Activated CD8-positive, alpha-beta T cell treated with anti-CD3 and anti-CD28 coated beads, Interleukin-2, amount 10 ng/mL, durations not matched to agents 7 days and 5 days (primary cell): ENCODE measurements at regions of chr12 and their contacts with region 1.

Region 1: GRCh38 chr12:92987362-92987761 is 58.3 kb upstream of the EEA1 start:
- DNase-seq: peak; percentile 35
- ATAC-seq: peak; percentile 72
- H3K4me3 Mint-ChIP-seq: no peak overlapping the region
- H3K27ac Mint-ChIP-seq: no peak overlapping the region
- H3K4me1 Mint-ChIP-seq: peaks cover 10% of the 10 kb centered on the region
- H3K27me3 Mint-ChIP-seq: peaks cover 10% of the 10 kb centered on the region

Region 2: GRCh38 chr12:92769124-92769901 is 218.0 kb before region 1 on chr12:
- CTCF ChIA-PET with region 1: no interaction called
- POLR2A ChIA-PET with region 1: no interaction called
- DNase-seq: no peak
- ATAC-seq: peak; percentile 75
- H3K4me3 Mint-ChIP-seq: peak overlapping the region; percentile 4
- H3K27ac Mint-ChIP-seq: peak overlapping the region; percentile 62
- H3K4me1 Mint-ChIP-seq: peaks cover 34% of the 10 kb centered on the region
- H3K27me3 Mint-ChIP-seq: no peaks in the 10 kb centered on the region

Region 3: GRCh38 chr12:92784795-92785562 is 202.4 kb before region 1 on chr12:
- CTCF ChIA-PET with region 1: interaction called, 27 read pairs
- POLR2A ChIA-PET with region 1: no interaction called
- DNase-seq: peak; percentile 44
- ATAC-seq: peak; percentile 97
- H3K4me3 Mint-ChIP-seq: no peak overlapping the region
- H3K27ac Mint-ChIP-seq: no peak overlapping the region
- H3K4me1 Mint-ChIP-seq: peaks cover 17% of the 10 kb centered on the region
- H3K27me3 Mint-ChIP-seq: no peaks in the 10 kb centered on the region

Region 4: GRCh38 chr12:92871116-92871515 is 116.2 kb before region 1 on chr12:
- CTCF ChIA-PET with region 1: no interaction called
- POLR2A ChIA-PET with region 1: no interaction called
- DNase-seq: no peak
- ATAC-seq: no peak
- H3K4me3 Mint-ChIP-seq: no peak overlapping the region
- H3K27ac Mint-ChIP-seq: no peak overlapping the region
- H3K4me1 Mint-ChIP-seq: peaks cover 6% of the 10 kb centered on the region
- H3K27me3 Mint-ChIP-seq: no peaks in the 10 kb centered on the region

Region 5: GRCh38 chr12:92905258-92905810 is 82.0 kb before region 1 on chr12:
- CTCF ChIA-PET with region 1: no interaction called
- POLR2A ChIA-PET with region 1: no interaction called
- DNase-seq: no peak
- ATAC-seq: no peak
- H3K4me3 Mint-ChIP-seq: no peak overlapping the region
- H3K27ac Mint-ChIP-seq: no peak overlapping the region
- H3K4me1 Mint-ChIP-seq: peaks cover 26% of the 10 kb centered on the region
- H3K27me3 Mint-ChIP-seq: no peaks in the 10 kb centered on the region

Region 6: DNA sequence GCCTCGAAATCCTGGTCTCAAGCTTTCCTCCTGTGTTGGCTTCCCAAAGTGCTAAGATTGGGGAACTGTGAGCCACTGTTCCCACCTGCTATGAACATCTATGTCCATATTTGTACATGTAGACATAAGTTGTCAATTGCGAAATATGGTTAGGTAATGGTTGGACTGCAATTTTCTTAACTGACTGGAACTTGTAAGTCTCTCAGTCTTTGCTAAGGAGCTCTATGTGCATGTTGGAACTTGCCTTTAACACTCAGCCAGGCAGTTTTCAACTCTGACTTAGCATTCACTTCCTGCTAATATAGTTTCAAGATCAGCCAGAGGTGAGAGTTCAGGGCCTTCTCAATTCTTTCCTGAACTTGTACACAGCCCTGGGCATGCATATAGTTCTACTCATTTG is 13.8 kb before region 1 on chr12:
- CTCF ChIA-PET with region 1: interaction called, 46 read pairs
- POLR2A ChIA-PET with region 1: interaction called, 3 read pairs
- DNase-seq: no peak
- ATAC-seq: no peak
- H3K4me3 Mint-ChIP-seq: no peak overlapping the region
- H3K27ac Mint-ChIP-seq: peak overlapping the region; percentile 34
- H3K4me1 Mint-ChIP-seq: peaks cover 13% of the 10 kb centered on the region
- H3K27me3 Mint-ChIP-seq: no peaks in the 10 kb centered on the region

Region 7: DNA sequence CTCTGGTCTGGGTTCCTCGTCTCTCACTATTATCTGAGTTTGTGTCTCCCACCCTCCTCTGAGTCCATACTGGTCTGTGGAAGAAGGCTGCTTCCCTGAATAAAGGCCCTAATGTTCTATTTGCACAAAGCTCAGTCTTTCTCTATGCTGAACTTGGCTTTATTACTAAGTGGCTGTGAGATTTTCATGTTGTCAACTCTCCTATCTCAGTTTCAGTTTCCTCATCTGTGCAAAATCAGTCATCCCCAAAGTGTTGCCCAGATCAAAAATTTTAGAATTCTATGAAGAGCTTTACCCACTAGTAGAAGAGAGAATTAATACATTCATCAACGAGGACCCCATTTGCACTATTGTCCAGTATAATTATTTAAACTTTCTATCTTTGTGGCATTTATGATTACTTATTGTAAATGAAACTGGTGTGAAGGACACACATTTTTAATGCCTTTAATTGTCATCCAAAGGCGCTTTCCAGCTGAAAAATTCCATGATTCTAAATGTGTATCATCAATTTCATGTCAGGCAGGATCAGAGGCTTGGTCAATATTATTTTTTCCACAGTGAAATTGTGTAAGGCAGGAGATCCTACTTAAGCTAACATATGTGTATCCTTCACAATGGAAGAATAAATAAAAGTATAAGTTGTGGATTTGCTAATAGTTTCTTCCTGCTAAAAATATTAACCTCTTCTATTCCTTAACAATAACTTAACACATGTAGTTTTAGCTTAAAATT is 20.8 kb after region 1 on chr12:
- CTCF ChIA-PET with region 1: interaction called, 22 read pairs
- POLR2A ChIA-PET with region 1: no interaction called
- DNase-seq: no peak
- ATAC-seq: no peak
- H3K4me3 Mint-ChIP-seq: no peak overlapping the region
- H3K27ac Mint-ChIP-seq: no peak overlapping the region
- H3K4me1 Mint-ChIP-seq: peaks cover 2% of the 10 kb centered on the region
- H3K27me3 Mint-ChIP-seq: no peaks in the 10 kb centered on the region

Region 8: GRCh38 chr12:93397412-93397811 is 410.1 kb after region 1 on chr12:
- CTCF ChIA-PET with region 1: interaction called, 72 read pairs
- POLR2A ChIA-PET with region 1: interaction called, 8 read pairs
- DNase-seq: no peak
- ATAC-seq: no peak
- H3K4me3 Mint-ChIP-seq: no peak overlapping the region
- H3K27ac Mint-ChIP-seq: no peak overlapping the region
- H3K4me1 Mint-ChIP-seq: no peaks in the 10 kb centered on the region
- H3K27me3 Mint-ChIP-seq: no peaks in the 10 kb centered on the region

Region 9: DNA sequence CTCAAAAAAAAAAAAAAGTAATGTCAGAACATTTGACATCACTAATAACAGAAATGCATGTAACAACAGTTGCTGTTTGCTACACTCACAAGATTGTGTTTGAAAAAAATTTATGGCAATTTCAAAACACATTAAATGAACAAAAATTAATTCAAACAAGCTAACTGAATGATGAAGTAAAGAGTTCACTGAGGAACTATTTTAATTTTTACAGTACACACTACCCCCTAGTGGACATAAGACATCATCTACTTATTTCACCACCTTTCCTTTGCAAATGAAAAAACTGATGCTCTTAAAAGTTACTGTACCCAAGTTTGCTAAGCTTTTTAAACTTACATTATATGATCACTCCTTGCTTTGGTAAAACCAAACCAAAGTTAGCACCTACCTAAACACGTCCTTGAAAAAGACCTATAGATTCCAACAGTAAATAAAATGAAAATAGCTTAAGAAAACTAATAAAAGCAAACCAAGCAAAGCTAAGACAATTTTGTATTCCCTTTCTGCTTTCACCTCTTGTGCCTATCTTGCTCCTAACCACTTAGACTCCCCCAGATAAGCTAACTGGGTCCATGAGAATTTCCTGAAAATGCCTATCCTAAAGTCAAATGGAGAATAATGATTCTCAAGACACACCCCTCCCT is 432.1 kb after region 1 on chr12:
- CTCF ChIA-PET with region 1: interaction called, 72 read pairs
- POLR2A ChIA-PET with region 1: no interaction called
- DNase-seq: no peak
- ATAC-seq: peak; percentile 62
- H3K4me3 Mint-ChIP-seq: no peak overlapping the region
- H3K27ac Mint-ChIP-seq: no peak overlapping the region
- H3K4me1 Mint-ChIP-seq: peaks cover 75% of the 10 kb centered on the region
- H3K27me3 Mint-ChIP-seq: no peaks in the 10 kb centered on the region